Breast epithelium (tissue), 4 donors: ENCODE measurements at regions of chr1 and their contacts with region 1.

Region 1: DNA sequence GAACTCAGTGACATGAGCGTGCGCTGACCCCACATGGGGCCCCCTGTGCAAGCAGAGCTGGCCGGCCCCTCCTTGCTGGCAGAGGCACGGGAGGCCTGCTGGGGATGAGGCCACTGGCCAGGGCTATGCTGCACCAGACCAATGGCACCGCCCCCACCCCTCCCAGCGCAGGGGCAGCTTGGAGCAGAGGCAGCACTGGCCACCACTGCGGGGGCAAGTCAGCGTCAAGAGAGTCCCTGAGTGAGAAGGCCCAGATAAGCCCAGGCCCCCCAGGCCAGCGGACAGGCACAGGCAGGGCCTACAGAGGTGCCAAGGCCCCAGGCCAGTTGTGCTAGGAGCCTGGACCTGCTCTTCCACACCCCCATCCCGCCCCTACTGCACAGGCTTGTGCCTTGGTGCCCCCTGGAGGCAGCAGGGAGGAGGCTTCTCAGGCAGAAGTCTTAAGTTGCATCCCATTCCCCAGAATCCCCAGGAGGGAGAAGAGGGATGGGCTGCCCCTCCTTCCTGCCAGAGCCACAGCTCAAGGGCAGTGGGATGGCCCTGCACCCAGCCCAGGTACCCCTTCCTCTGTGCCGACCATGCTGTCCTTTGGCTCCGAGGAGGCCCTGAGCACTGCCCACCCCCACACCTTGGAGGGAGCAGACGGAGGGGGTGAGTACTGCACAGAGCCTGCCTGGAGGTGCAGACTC is 35.8 kb downstream of the EPHX1 start:
- DNase-seq: peak; percentile 73 to 79
- H3K4me3 ChIP-seq: no peak overlapping the region
- H3K27ac ChIP-seq: peak overlapping the region; percentile 36 to 48
- H3K4me1 ChIP-seq: no peaks in the 10 kb centered on the region
- H3K27me3 ChIP-seq: no peaks in the 10 kb centered on the region
- CTCF ChIP-seq: peak in 2 of 3 donors; percentile 79 to 84
- POLR2A ChIP-seq: no peak

Region 2: DNA sequence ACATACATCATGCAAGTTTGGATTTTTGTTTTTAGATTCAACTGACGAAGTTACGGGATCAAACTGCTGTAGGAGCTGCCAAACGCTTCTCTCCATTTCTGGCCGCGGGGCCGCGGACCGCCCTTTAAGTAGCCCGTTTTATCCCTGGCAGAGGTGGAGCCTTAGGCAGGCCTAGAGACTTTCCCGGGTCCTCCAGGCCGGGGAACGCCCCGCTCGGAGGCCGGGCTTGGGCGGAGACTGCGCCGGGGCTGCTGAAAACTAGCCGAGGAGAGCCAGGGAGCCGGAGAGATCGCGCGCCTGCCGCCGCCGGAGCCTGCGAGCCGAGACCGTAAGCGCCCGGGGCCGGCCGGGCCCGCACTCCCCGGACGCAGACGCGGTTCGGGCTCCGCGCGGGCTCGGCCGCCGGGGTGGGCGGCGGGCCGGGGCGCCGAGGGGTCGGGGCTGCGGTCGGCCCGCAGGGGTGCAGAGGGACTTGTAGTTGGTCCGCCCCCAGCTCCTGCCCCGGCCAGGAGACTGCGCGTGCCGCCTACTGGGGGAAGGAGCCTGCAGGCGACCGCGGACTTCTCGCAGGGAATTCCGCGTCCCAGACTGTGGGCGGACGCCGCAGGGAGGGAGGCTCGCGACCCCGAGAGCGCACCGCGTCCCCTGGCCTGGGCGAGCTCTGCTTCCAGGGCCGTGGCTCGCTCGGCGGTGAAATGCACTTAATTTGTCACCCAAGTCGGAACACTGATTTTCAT is 35.7 kb before region 1 on chr1 and contains the start of gene EPHX1:
- intact Hi-C with region 1: loop called (anchors 2 kb)
- DNase-seq: peak; percentile 83 to 87
- H3K4me3 ChIP-seq: peak within 1 kb of the TSS; percentile 60 to 77 (median 76)
- H3K27ac ChIP-seq: peak within 1 kb of the TSS; percentile 82 to 91
- H3K4me1 ChIP-seq: peaks cover 6 to 10% of the 10 kb centered on the region in 2 donors
- H3K27me3 ChIP-seq: no peaks in the 10 kb centered on the region
- CTCF ChIP-seq: peak in 2 of 3 donors; percentile 12 to 22
- POLR2A ChIP-seq: no peak
- total RNA-seq, gene EPHX1: 63.6 to 168 (median 67.3) TPM